HEK293T (cell line): ENCODE measurements at regions of chr6 and their contacts with region 1.

Region 1: GRCh38 chr6:2791124-2791974 is 26.2 kb downstream of the WRNIP1 start:
- DNase-seq: peak; percentile 72

Region 2: DNA sequence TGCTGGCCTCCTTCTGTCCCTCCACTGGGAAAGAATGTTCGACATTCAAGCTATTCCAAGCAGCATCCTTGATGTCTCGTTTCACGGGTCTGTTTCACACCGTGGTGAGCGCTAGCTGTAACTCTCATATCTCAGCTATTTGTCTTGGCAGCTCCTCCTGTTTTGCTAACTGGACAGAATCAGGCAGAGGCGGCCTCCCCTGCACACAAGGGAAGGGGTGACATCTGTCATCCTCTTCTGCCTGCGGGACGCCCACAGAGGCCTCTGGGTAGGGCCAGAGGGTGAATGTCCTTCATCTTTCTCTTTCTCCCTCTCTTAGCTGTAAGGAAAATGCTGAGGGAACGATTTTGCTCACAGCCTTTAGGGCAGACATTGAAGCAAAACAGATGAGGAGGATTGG is 313.1 kb before region 1 on chr6:
- CTCF ChIA-PET with region 1: no interaction called
- POLR2A ChIA-PET with region 1: no interaction called
- DNase-seq: no peak

Region 3: DNA sequence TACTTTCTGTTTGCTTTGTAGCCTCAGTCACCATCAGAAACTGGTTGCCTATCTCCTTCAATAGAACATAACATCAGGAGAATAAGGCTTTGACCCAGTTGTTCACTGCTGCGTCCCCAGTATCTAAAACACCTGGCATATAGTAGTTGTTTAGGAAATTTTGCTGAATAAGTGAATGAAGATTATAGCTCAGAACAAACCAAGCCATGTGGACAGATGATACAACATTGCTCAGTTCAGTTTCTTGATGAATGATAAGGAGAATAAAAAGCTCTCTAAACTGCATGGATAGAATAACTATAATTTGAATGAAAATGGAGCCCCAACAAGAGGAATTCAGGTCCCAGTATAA is 55.5 kb after region 1 on chr6:
- CTCF ChIA-PET with region 1: interaction called, 10 read pairs
- POLR2A ChIA-PET with region 1: interaction called, 3 read pairs
- DNase-seq: no peak

Region 4: GRCh38 chr6:2931970-2932748 is 140.8 kb after region 1 on chr6:
- CTCF ChIA-PET with region 1: interaction called, 14 read pairs
- POLR2A ChIA-PET with region 1: interaction called, 5 read pairs
- DNase-seq: peak; percentile 84